GM12878 (cell line): ENCODE measurements at regions of chr6 and their contacts with region 1.

Region 1: DNA sequence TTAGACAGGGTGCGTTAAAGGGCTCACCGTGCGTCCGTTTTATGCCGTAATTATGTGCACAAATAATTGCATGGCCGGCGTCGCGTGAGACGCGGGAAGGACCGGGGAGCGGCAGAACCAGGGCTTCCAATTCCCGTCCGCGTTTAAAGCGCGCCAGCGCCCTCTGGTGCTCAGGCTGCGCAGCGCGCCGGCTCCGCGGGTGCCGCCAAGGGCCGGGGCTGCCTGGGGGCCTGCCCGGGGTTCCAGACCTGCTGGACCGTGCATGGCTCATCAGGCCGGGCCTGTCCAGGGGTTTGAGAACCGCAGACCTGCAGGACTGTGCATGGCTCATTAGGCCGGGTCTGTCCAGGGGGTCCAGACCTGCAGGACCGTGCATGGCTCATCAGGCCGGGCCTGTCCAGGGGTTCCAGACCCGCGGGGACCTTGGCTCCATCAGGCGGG is 369.0 kb downstream of the THBS2 start:
- DNase-seq: no peak
- ATAC-seq: peak; percentile 79
- H3K4me3 ChIP-seq: no peak overlapping the region
- H3K27ac ChIP-seq: no peak overlapping the region
- H3K4me1 ChIP-seq: no peaks in the 10 kb centered on the region
- H3K27me3 ChIP-seq: no peaks in the 10 kb centered on the region
- CTCF ChIP-seq: peak; percentile 43 to 58 (median 53); a peak in 5 of 6 replicates
- EP300 ChIP-seq: no peak
- POLR2A ChIP-seq: no peak
- RAD21 ChIP-seq: peak; percentile 62

Region 2: GRCh38 chr6:168157272-168158007 is 727.2 kb before region 1 on chr6:
- CTCF ChIA-PET with region 1: no interaction called
- POLR2A ChIA-PET with region 1: no interaction called
- RAD21 ChIA-PET with region 1: no interaction called
- SMC1A ChIA-PET with region 1: no interaction called
- in situ Hi-C with region 1: no loop called
- intact Hi-C with region 1: loop called (anchors 10 kb)
- DNase-seq: no peak
- ATAC-seq: no peak
- H3K4me3 ChIP-seq: no peak overlapping the region
- H3K27ac ChIP-seq: no peak overlapping the region
- H3K4me1 ChIP-seq: no peaks in the 10 kb centered on the region
- H3K27me3 ChIP-seq: no peaks in the 10 kb centered on the region
- CTCF ChIP-seq: no peak
- EP300 ChIP-seq: no peak
- POLR2A ChIP-seq: no peak
- RAD21 ChIP-seq: no peak

Region 3: GRCh38 chr6:168370310-168370991 is 514.2 kb before region 1 on chr6:
- CTCF ChIA-PET with region 1: interaction called, 4 read pairs
- POLR2A ChIA-PET with region 1: no interaction called
- RAD21 ChIA-PET with region 1: no interaction called
- SMC1A ChIA-PET with region 1: no interaction called
- in situ Hi-C with region 1: no loop called
- intact Hi-C with region 1: loop called (anchors 1 kb)
- DNase-seq: no peak
- ATAC-seq: peak; percentile 74
- H3K4me3 ChIP-seq: no peak overlapping the region
- H3K27ac ChIP-seq: no peak overlapping the region
- H3K4me1 ChIP-seq: no peaks in the 10 kb centered on the region
- H3K27me3 ChIP-seq: no peaks in the 10 kb centered on the region
- CTCF ChIP-seq: peak in 2 of 3 experiments; percentile 34 to 49; a peak in 3 of 6 replicates
- EP300 ChIP-seq: no peak
- POLR2A ChIP-seq: no peak
- RAD21 ChIP-seq: peak; percentile 44

Region 4: DNA sequence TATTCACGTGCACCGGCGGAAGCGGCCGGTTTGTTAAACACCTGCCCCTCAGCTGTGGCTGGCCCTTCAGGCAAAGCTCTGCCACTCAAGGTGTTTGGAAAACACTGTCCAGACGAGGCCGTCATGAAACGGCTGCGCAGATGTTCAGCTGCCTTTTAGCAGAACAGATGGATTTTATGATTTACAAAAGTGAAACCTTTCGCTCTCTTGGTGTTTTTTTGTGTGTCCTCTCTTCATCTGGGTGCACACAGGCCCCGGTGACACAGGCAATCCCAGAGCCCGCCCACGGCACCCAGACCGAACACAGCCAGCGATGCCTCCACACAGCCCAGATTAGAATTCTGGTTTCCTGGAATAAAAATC is 46.6 kb before region 1 on chr6:
- CTCF ChIA-PET with region 1: no interaction called
- POLR2A ChIA-PET with region 1: no interaction called
- RAD21 ChIA-PET with region 1: no interaction called
- SMC1A ChIA-PET with region 1: no interaction called
- in situ Hi-C with region 1: no loop called
- intact Hi-C with region 1: no loop called
- DNase-seq: no peak
- ATAC-seq: no peak
- H3K4me3 ChIP-seq: no peak overlapping the region
- H3K27ac ChIP-seq: no peak overlapping the region
- H3K4me1 ChIP-seq: no peaks in the 10 kb centered on the region
- H3K27me3 ChIP-seq: no peaks in the 10 kb centered on the region
- CTCF ChIP-seq: no peak
- EP300 ChIP-seq: no peak
- POLR2A ChIP-seq: no peak
- RAD21 ChIP-seq: no peak

Region 5: DNA sequence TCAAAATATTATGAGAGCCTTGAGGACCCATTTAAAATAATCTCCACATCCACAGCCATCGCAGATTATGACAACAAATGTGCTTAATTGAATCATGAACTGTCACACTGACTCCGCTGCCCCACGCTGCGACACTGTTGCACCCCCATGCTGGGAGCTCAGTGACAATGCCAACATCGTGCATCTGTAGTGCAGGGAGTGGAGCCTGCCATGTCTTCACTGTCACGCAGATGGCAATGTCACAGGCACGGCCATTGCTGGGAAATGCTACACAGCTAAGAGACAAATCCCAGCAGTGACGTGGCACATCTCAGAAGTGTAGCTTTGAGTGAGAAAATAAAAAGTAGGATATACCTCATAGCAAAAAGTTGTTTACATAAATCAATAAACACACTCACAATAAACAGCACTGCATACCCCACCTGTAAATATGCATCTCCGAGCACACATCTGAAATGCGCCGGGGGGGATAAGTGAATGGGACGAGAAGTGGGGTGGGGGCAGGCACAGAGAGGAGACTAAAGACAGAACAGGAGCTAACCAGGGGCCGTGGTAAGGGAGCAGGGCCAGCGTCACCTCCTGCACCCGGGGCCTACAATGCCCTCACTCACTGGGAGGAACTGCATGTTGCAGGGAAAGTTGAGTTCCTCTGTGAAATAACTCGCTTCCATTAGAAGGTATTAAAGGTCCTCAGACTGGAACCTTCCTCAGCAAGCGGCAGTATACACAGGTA is 19.1 kb after region 1 on chr6:
- CTCF ChIA-PET with region 1: no interaction called
- POLR2A ChIA-PET with region 1: no interaction called
- RAD21 ChIA-PET with region 1: no interaction called
- SMC1A ChIA-PET with region 1: no interaction called
- in situ Hi-C with region 1: no loop called
- intact Hi-C with region 1: no loop called
- DNase-seq: no peak
- ATAC-seq: no peak
- H3K4me3 ChIP-seq: no peak overlapping the region
- H3K27ac ChIP-seq: no peak overlapping the region
- H3K4me1 ChIP-seq: no peaks in the 10 kb centered on the region
- H3K27me3 ChIP-seq: no peaks in the 10 kb centered on the region
- CTCF ChIP-seq: no peak
- EP300 ChIP-seq: no peak
- POLR2A ChIP-seq: no peak
- RAD21 ChIP-seq: no peak